ENCODE measurements at regions of chr11 and their contacts with region 1.

Region 1: GRCh38 chr11:33362051-33362910 is 105.1 kb downstream of the HIPK3 start:
- DNase-seq: peak in 1 of 3 donors; percentile 19
- ATAC-seq: peak; percentile 56
- H3K4me3 ChIP-seq: no peak overlapping the region
- H3K4me1 ChIP-seq: no peaks in the 10 kb centered on the region
- CTCF ChIP-seq: peak; percentile 44

Region 2: DNA sequence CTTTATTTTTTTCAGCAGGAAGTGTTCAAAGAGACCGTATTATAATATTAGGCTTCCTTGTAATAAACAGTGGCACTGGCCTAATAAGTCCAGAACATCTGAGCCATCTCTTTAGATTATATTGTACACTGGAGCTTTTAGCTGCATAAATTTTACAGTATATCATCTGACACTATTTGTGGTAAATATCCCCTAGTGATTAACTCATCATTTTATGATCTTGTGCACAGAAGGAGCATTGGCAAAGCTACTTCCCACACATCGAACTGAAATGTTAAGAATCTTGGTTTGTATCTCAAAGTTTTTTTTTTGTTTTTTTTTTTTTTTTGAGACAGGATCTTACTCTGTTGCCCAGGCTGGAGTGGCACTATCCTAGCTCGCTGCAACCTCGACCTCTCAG is 57.6 kb after region 1 on chr11:
- intact Hi-C with region 1: no loop called
- DNase-seq: no peak
- ATAC-seq: no peak
- H3K4me3 ChIP-seq: no peak overlapping the region
- H3K4me1 ChIP-seq: no peaks in the 10 kb centered on the region
- CTCF ChIP-seq: no peak

Region 3: GRCh38 chr11:33687733-33688479 is 325.6 kb after region 1 on chr11:
- intact Hi-C with region 1: loop called (anchors 10 kb)
- DNase-seq: peak in 1 of 3 donors; percentile 79
- ATAC-seq: no peak
- H3K4me3 ChIP-seq: no peak overlapping the region
- H3K4me1 ChIP-seq: peaks cover 25% of the 10 kb centered on the region
- CTCF ChIP-seq: no peak

Region 4: DNA sequence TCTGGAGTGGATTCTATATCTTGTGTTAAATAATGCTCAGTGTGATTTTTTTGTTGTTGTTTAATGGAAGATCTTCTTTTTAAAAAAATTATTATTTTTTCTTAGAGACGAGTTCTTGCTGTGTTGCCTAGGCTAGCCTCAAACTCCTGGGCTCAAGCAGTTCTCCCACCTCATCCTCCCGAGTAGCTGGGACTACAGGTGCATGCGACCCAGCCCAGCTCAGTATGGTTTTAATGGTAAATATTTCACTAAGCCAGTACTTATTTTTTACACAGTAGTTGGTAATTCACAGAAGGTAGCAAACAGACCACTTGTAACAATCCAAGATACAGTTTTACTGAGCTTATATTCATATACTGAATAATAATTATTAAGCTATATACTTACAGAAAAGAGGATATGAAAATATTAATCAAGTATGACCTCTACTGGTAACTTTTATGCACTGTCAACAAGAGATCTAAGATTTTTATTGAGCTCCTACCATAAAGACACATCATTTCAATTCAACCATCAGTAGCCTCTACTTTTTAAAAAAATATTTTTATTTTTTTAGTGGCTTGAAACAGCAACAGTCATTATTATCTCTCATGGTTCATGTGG is 380.1 kb after region 1 on chr11:
- intact Hi-C with region 1: loop called in 1 of 2 experiments (anchors 10 kb)
- DNase-seq: no peak
- ATAC-seq: peak; percentile 36
- H3K4me3 ChIP-seq: no peak overlapping the region
- H3K4me1 ChIP-seq: no peaks in the 10 kb centered on the region
- CTCF ChIP-seq: no peak

Region 5: GRCh38 chr11:33829433-33830141 is 467.3 kb after region 1 on chr11:
- intact Hi-C with region 1: loop called (anchors 5 to 10 kb)
- DNase-seq: peak in 2 of 3 donors; percentile 58 to 81
- ATAC-seq: peak; percentile 74
- H3K4me3 ChIP-seq: no peak overlapping the region
- H3K4me1 ChIP-seq: peaks cover 8% of the 10 kb centered on the region
- CTCF ChIP-seq: peak; percentile 39

Measured in mucosa of descending colon (tissue), 3 donors.